ENCODE measurements at regions of chr13 and their contacts with region 1.

Region 1: DNA sequence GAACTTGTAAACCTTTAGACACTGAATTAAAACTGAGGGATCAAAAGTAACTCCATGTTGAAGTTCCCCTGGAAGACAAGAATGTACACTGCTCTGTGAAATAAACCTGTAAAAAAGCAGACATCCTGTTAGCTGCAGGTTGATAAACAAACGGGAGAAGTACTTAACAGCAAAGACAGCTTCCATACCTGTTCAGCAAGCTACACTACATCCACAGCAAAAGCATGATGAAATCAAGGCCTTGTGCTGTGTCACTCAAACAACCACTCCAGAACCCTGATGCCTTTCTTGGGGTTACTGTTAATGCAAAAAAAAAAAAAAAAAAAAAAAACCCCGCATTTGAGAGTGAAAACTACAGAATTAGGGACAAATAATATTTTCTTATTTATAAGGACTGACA is 20.8 kb downstream of the ANKRD10 start:
- DNase-seq: no peak
- ATAC-seq: no peak
- H3K4me3 Mint-ChIP-seq: no peak overlapping the region
- H3K27ac Mint-ChIP-seq: peak overlapping the region; percentile 20
- H3K4me1 Mint-ChIP-seq: no peaks in the 10 kb centered on the region
- H3K27me3 Mint-ChIP-seq: no peaks in the 10 kb centered on the region
- CTCF ChIP-seq: no peak

Region 2: DNA sequence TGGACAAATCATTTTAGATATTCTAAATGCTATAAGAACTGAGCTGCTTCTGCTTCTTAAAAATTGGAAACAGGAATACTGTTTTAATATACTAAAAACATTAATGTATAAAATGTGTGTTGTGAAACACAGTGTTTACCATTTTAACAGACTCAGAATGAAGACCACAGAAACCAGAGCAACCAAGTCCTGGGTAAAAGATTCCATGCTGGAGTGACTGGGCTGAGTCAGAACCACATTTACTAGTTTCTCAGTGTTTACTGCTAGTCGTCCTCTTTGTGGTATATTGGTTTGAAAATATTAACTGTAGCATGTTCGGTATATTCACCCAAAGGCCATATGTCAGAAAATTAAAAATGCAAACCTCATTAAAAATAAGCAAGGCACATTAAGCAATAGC is 11.1 kb before region 1 on chr13:
- CTCF ChIA-PET with region 1: interaction called, 3 read pairs
- POLR2A ChIA-PET with region 1: interaction called, 11 read pairs
- intact Hi-C with region 1: no loop called
- DNase-seq: no peak
- ATAC-seq: peak; percentile 27
- H3K4me3 Mint-ChIP-seq: no peak overlapping the region
- H3K27ac Mint-ChIP-seq: no peak overlapping the region
- H3K4me1 Mint-ChIP-seq: peaks cover 7% of the 10 kb centered on the region
- H3K27me3 Mint-ChIP-seq: no peaks in the 10 kb centered on the region
- CTCF ChIP-seq: no peak

Measured in activated CD8-positive, alpha-beta T cell treated with anti-CD3 and anti-CD28 coated beads for 36 hours (primary cell).